Ascending aorta (tissue), 2 donors: ENCODE measurements at regions of chrX and their contacts with region 1.

Region 1: DNA sequence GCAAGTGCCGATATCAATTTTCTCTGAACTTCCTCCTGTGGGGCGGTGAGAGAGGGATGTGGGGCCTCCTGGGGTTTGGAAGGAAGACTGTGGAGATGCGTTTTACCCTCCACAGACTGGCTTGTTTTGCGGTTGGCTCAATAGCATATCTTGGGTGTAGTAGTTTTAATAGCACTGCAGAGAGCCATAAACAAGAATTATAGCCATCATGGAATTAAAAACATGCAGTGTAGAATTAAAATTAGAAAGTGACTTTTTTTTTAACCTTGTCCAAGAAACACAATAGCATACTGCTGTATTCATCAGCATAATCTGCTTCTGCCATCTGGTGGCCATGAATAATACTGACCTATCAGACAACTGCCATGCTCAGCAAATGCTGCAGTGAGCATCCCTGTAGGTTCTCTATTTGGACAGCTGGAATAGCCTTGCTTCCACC is 47.3 kb upstream of the SCML1 start:
- DNase-seq: no peak
- H3K4me3 ChIP-seq: no peak overlapping the region
- H3K27ac ChIP-seq: peak overlapping the region in 1 of 2 donors; percentile 59
- H3K4me1 ChIP-seq: peaks cover 0 to 8% of the 10 kb centered on the region in 2 donors
- H3K27me3 ChIP-seq: no peaks in the 10 kb centered on the region
- CTCF ChIP-seq: peak; percentile 54 to 75 (median 56)

Region 2: GRCh38 chrX:16836371-16836770 is 853.6 kb before region 1 on chrX:
- intact Hi-C with region 1: loop called (anchors 5 kb)
- DNase-seq: no peak
- H3K4me3 ChIP-seq: no peak overlapping the region
- H3K27ac ChIP-seq: no peak overlapping the region
- H3K4me1 ChIP-seq: peaks cover 0 to 12% of the 10 kb centered on the region in 2 donors
- H3K27me3 ChIP-seq: no peaks in the 10 kb centered on the region
- CTCF ChIP-seq: peak in 1 of 3 experiments; percentile 32

Region 3: DNA sequence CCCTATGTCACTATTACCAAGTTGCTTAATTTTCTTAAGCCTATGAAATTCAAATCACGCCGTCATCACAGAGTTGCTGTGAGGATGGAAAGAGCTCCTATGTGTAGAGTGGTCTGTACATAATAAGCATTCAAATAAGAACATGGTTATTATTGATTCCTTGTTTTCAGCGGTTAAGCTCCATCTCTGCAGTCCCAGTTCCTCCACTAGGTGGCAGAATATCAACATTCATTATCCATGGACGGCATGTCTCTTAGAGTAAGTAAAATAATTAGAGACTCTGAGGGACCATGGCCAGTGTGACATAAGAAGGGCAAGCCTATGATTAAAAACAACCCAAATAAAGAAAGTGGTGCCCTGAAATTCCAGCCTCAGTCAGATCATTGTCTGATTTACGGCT is 447.5 kb before region 1 on chrX:
- intact Hi-C with region 1: loop called (anchors 1 kb)
- DNase-seq: peak in 1 of 2 donors; percentile 68
- H3K4me3 ChIP-seq: no peak overlapping the region
- H3K27ac ChIP-seq: no peak overlapping the region
- H3K4me1 ChIP-seq: no peaks in the 10 kb centered on the region
- H3K27me3 ChIP-seq: no peaks in the 10 kb centered on the region
- CTCF ChIP-seq: peak; percentile 57 to 75 (median 70)

Region 4: DNA sequence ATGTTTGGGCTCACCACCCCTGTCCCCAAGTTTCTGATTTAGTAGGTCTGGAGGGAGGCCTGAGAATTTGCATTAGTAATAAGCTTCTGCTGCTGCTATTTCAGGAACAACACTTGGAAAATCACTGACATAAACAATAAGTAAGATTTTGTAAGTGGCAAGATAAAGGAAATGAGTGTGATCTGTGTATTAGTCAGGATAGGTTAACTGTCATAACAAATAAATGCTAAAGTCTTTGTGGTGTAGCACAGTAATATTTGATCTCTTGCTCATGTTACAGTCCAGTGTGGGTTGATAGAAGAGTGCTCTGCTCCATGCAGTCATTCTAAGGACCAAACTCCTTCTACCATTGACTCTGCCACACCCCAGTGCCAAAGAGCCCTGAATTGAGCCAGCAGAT is 248.0 kb before region 1 on chrX:
- intact Hi-C with region 1: no loop called
- DNase-seq: no peak
- H3K4me3 ChIP-seq: no peak overlapping the region
- H3K27ac ChIP-seq: no peak overlapping the region
- H3K4me1 ChIP-seq: no peaks in the 10 kb centered on the region
- H3K27me3 ChIP-seq: no peaks in the 10 kb centered on the region
- CTCF ChIP-seq: no peak

Region 5: GRCh38 chrX:17535229-17535628 is 154.8 kb before region 1 on chrX:
- intact Hi-C with region 1: loop called (anchors 5 kb)
- DNase-seq: peak in 1 of 2 donors; percentile 64
- H3K4me3 ChIP-seq: no peak overlapping the region
- H3K27ac ChIP-seq: no peak overlapping the region
- H3K4me1 ChIP-seq: no peaks in the 10 kb centered on the region
- H3K27me3 ChIP-seq: no peaks in the 10 kb centered on the region
- CTCF ChIP-seq: peak; percentile 14 to 41 (median 24)

Region 6: GRCh38 chrX:17590892-17591740 is 98.9 kb before region 1 on chrX:
- intact Hi-C with region 1: loop called (anchors 2 kb)
- DNase-seq: peak in 1 of 2 donors; percentile 80
- H3K4me3 ChIP-seq: peak overlapping the region; percentile 24 to 32
- H3K27ac ChIP-seq: peak overlapping the region; percentile 76 to 77
- H3K4me1 ChIP-seq: peaks cover 4 to 21% of the 10 kb centered on the region in 2 donors
- H3K27me3 ChIP-seq: no peaks in the 10 kb centered on the region
- CTCF ChIP-seq: peak; percentile 52 to 64 (median 53)

Region 7: GRCh38 chrX:17621566-17622270 is 68.3 kb before region 1 on chrX:
- intact Hi-C with region 1: loop called (anchors 10 kb)
- DNase-seq: no peak
- H3K4me3 ChIP-seq: no peak overlapping the region
- H3K27ac ChIP-seq: no peak overlapping the region
- H3K4me1 ChIP-seq: no peaks in the 10 kb centered on the region
- H3K27me3 ChIP-seq: no peaks in the 10 kb centered on the region
- CTCF ChIP-seq: no peak

Region 8: DNA sequence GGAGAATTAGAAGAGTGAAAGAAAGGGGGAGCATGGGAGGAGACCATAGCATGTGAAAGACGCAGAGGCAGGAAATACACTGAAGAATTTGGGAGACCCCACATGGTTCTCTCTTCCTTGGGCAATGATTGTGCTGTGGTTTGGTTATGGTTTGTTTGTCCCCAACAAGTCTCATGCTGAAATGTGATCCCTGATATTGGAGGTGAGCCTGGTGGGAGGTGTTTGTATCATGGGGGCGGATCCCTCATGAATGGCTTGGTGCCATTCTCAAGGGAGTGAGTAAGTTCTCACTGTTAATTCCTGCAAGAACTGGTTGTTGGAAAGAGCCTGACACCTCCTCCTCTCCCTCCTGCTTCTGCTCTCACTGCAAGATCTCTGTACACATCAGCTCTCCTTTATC is 249.7 kb after region 1 on chrX:
- intact Hi-C with region 1: no loop called
- DNase-seq: no peak
- H3K4me3 ChIP-seq: no peak overlapping the region
- H3K27ac ChIP-seq: no peak overlapping the region
- H3K4me1 ChIP-seq: no peaks in the 10 kb centered on the region
- H3K27me3 ChIP-seq: no peaks in the 10 kb centered on the region
- CTCF ChIP-seq: no peak